Ovary (tissue), 10 donors: ENCODE measurements at regions of chr18 and their contacts with region 1.

Region 1: GRCh38 chr18:37346048-37346447 is 219.6 kb downstream of the CELF4 start:
- DNase-seq: no peak
- H3K4me3 ChIP-seq: no peak overlapping the region
- H3K27ac ChIP-seq: no peak overlapping the region
- H3K4me1 ChIP-seq: no peaks in the 10 kb centered on the region
- H3K27me3 ChIP-seq: no peaks in the 10 kb centered on the region
- CTCF ChIP-seq: no peak
- EP300 ChIP-seq: no peak
- POLR2A ChIP-seq: no peak

Region 2: GRCh38 chr18:37403100-37403781 is 57.2 kb after region 1 on chr18:
- intact Hi-C with region 1: loop called in 1 of 4 experiments (anchors 10 kb)
- DNase-seq: peak in 4 of 5 donors; percentile 29 to 52 (median 36)
- H3K4me3 ChIP-seq: no peak overlapping the region
- H3K27ac ChIP-seq: no peak overlapping the region
- H3K4me1 ChIP-seq: no peaks in the 10 kb centered on the region
- H3K27me3 ChIP-seq: no peaks in the 10 kb centered on the region
- CTCF ChIP-seq: no peak
- EP300 ChIP-seq: no peak
- POLR2A ChIP-seq: no peak

Region 3: GRCh38 chr18:37429791-37430190 is 83.7 kb after region 1 on chr18:
- intact Hi-C with region 1: loop called in 1 of 4 experiments (anchors 10 kb)
- DNase-seq: no peak
- H3K4me3 ChIP-seq: no peak overlapping the region
- H3K27ac ChIP-seq: no peak overlapping the region
- H3K4me1 ChIP-seq: no peaks in the 10 kb centered on the region
- H3K27me3 ChIP-seq: no peaks in the 10 kb centered on the region
- CTCF ChIP-seq: no peak
- EP300 ChIP-seq: no peak
- POLR2A ChIP-seq: no peak